ENCODE measurements at regions of chr7 and their contacts with region 1.

Region 1: GRCh38 chr7:130982160-130982638 is 248.2 kb upstream of the KLF14 start:
- DNase-seq: peak; percentile 54
- H3K4me3 Mint-ChIP-seq: no peak overlapping the region
- H3K27ac Mint-ChIP-seq: no peak overlapping the region
- H3K4me1 Mint-ChIP-seq: peaks cover 55% of the 10 kb centered on the region
- H3K27me3 Mint-ChIP-seq: no peaks in the 10 kb centered on the region

Region 2: GRCh38 chr7:130777426-130777825 is 204.8 kb before region 1 on chr7:
- CTCF ChIA-PET with region 1: no interaction called
- intact Hi-C with region 1: no loop called
- DNase-seq: no peak
- H3K4me3 Mint-ChIP-seq: no peak overlapping the region
- H3K27ac Mint-ChIP-seq: no peak overlapping the region
- H3K4me1 Mint-ChIP-seq: no peaks in the 10 kb centered on the region
- H3K27me3 Mint-ChIP-seq: peaks cover 34% of the 10 kb centered on the region

Region 3: DNA sequence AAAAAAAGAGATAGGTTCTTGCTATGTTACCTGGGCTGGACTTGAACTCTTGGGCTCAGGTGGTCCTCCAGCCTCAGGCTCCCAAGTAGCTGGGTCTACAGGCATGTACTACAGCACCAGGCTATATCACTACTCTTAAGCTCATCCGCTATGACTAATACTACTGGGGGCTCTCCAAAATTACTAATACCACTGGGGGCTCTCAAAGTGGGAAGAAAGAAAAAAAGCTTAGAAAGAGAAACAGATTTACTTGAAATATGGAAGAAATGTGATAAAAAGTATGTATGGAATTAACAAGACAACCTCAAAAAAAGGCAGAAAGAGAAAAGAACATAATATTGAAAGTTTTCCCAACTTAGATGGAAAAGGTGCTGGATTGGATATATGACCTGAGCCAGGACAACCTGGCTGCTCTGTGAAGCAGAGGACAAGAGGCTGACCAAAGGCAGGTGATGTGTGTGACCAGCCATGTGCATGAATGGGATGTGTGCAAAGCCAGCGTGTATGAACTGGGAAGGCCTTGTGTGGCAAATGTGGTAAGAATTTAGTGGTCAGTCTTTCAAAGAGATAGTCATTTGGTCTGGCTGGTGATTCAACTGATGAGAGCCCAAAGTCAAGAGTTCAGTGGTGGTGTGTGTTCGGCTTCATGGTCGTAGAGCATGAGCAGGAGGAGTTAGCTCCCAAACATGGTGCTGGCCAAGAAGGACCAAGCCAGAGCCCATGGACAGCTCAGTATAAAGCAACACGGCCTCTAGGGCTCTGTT is 15.8 kb before region 1 on chr7:
- CTCF ChIA-PET with region 1: interaction called, 32 read pairs
- intact Hi-C with region 1: no loop called
- DNase-seq: no peak
- H3K4me3 Mint-ChIP-seq: peak overlapping the region; percentile 1
- H3K27ac Mint-ChIP-seq: peak overlapping the region; percentile 90
- H3K4me1 Mint-ChIP-seq: peaks cover 77% of the 10 kb centered on the region
- H3K27me3 Mint-ChIP-seq: no peaks in the 10 kb centered on the region

Region 4: DNA sequence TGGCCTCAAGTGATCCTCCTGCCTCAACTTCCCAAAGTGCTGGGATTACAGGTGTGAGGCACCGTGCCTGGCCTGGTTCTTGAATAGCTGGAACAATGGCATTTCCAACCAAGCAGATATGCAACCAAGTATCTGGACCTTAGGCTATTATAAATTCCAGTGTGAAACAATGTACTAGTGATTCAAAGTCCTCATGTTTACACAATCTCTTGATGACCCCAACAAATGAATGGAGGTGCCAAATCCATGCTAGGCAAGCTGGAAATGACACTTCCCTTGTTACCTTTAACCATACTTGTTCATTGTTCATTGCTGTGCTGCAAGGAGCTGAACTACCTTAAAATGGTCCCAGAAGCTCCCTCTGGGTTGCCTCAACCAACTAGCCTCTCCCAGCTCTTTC is 34.0 kb after region 1 on chr7:
- CTCF ChIA-PET with region 1: interaction called, 10 read pairs
- intact Hi-C with region 1: no loop called
- DNase-seq: no peak
- H3K4me3 Mint-ChIP-seq: no peak overlapping the region
- H3K27ac Mint-ChIP-seq: no peak overlapping the region
- H3K4me1 Mint-ChIP-seq: peaks cover 81% of the 10 kb centered on the region
- H3K27me3 Mint-ChIP-seq: no peaks in the 10 kb centered on the region

Region 5: DNA sequence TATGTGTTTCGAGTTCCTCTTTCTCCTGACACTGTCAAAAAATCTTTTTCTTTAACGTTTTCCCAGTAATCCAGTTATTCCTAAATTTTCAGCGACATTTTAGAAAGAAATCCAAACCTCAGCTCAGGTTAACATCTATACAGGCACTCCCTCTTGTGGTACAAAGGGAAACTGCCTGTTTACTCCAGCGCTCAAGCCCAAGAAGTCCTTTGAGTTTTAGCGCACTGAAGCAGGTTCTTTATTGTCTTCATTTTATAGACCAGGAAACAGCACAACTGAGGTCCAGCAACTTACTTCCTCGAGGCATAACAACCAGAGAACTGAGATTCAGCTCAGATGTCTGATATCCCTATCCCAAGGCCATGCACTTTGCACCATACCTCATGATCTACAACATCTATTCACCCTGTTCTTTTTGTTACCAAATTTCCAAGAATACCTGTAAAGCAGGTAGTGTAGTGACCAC is 58.3 kb after region 1 on chr7:
- CTCF ChIA-PET with region 1: interaction called, 72 read pairs
- intact Hi-C with region 1: loop called (anchors 1 kb)
- DNase-seq: peak; percentile 75
- H3K4me3 Mint-ChIP-seq: peak overlapping the region; percentile 61
- H3K27ac Mint-ChIP-seq: peak overlapping the region; percentile 65
- H3K4me1 Mint-ChIP-seq: peaks cover 64% of the 10 kb centered on the region
- H3K27me3 Mint-ChIP-seq: no peaks in the 10 kb centered on the region

Region 6: GRCh38 chr7:131183611-131184119 is 201.5 kb after region 1 on chr7:
- CTCF ChIA-PET with region 1: no interaction called
- intact Hi-C with region 1: no loop called
- DNase-seq: peak; percentile 59
- H3K4me3 Mint-ChIP-seq: no peak overlapping the region
- H3K27ac Mint-ChIP-seq: no peak overlapping the region
- H3K4me1 Mint-ChIP-seq: peaks cover 40% of the 10 kb centered on the region
- H3K27me3 Mint-ChIP-seq: no peaks in the 10 kb centered on the region

Measured in activated naive CD4-positive, alpha-beta T cell treated with anti-CD3 and anti-CD28 coated beads for 36 hours (primary cell).